Ascending aorta (tissue), 2 donors: ENCODE measurements at regions of chr21 and their contacts with region 1.

Region 1: DNA sequence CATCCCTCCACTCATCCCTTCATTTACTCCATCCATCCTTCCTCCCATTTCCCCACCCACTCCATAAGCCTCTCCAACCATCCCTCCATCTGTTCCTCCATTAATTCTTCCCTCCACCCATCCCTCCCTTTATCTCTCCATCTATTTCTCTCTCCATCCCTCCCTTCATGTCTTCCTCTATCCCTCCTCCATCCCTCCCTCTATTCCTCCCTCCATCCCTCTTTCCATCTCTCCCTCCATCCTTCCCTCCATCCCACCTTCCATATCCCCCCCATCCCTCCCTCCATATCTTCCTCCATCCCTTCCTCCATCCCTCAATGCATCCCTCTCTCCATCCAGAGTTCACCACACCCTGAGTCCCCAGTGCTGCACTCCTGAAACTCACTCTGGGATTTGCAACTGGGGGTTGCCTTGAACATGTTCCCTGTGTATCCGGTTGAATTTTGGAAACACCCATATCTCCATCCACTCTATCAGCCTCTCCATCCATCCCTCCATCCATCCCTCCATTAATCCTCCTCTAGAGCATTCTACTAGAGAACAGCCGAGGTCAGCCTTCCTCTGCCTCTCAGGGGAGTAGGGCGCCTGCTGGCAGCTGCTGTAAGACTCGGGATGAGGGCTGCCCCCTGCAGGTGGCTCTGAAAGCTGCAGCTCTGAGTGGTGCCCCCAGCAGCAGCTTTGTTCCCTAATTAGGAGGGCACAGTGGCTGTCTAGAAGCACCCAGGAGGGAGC is 39.4 kb downstream of the ABCG1 start:
- DNase-seq: peak in 1 of 2 donors; percentile 78
- H3K4me3 ChIP-seq: no peak overlapping the region
- H3K27ac ChIP-seq: no peak overlapping the region
- H3K4me1 ChIP-seq: no peaks in the 10 kb centered on the region
- H3K27me3 ChIP-seq: no peaks in the 10 kb centered on the region
- CTCF ChIP-seq: peak; percentile 45 to 70 (median 65)

Region 2: GRCh38 chr21:42135386-42136052 is 122.8 kb before region 1 on chr21:
- intact Hi-C with region 1: no loop called
- DNase-seq: no peak
- H3K4me3 ChIP-seq: no peak overlapping the region
- H3K27ac ChIP-seq: no peak overlapping the region
- H3K4me1 ChIP-seq: no peaks in the 10 kb centered on the region
- H3K27me3 ChIP-seq: no peaks in the 10 kb centered on the region
- CTCF ChIP-seq: no peak

Region 3: GRCh38 chr21:42145569-42146272 is 112.6 kb before region 1 on chr21:
- intact Hi-C with region 1: loop called (anchors 1 kb)
- DNase-seq: peak; percentile 5 to 71
- H3K4me3 ChIP-seq: no peak overlapping the region
- H3K27ac ChIP-seq: no peak overlapping the region
- H3K4me1 ChIP-seq: no peaks in the 10 kb centered on the region
- H3K27me3 ChIP-seq: no peaks in the 10 kb centered on the region
- CTCF ChIP-seq: peak; percentile 85 to 93 (median 89)

Region 4: GRCh38 chr21:42164064-42164789 is 94.1 kb before region 1 on chr21:
- intact Hi-C with region 1: loop called (anchors 5 kb)
- DNase-seq: peak in 1 of 2 donors; percentile 75
- H3K4me3 ChIP-seq: no peak overlapping the region
- H3K27ac ChIP-seq: no peak overlapping the region
- H3K4me1 ChIP-seq: no peaks in the 10 kb centered on the region
- H3K27me3 ChIP-seq: no peaks in the 10 kb centered on the region
- CTCF ChIP-seq: peak; percentile 13 to 36 (median 36)